ENCODE measurements at regions of chr4 and their contacts with region 1.

Region 1: DNA sequence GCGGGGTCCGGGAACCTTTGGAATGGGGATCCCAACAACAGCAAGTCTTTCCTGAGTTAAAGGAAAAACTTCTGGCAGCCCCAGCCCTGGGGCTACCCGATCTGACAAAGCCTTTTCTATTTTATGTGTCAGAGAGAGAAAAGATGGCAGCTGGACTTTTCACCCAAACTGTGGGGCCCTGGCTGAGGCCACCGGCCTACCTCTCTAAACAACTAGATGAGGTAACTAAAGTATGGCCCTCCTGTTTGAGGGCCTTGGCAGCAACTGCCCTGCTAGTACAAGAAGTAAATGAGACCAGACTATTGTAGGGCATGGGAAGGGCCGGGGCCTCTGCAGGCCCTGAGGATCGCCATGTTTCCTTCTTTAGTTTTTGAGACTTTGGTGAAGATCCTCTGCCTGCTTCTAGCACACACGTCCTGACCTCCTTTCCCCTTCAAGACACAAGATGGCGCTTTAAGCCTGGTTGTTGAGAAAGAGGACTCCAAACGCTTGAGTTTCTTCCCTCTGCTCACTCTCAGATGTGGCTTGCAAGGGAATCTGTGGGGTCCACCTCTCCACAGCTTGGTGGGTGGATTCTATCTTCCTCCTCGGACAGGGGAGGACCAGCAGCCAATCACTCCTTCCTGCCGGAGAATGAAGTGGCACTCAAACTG is 18.5 kb upstream of the DRD5 start:
- DNase-seq: peak in 1 of 2 donors; percentile 77
- H3K4me3 ChIP-seq: no peak overlapping the region
- H3K27ac ChIP-seq: no peak overlapping the region
- H3K4me1 ChIP-seq: no peaks in the 10 kb centered on the region
- H3K27me3 ChIP-seq: no peaks in the 10 kb centered on the region
- CTCF ChIP-seq: peak; percentile 37 to 68 (median 53)

Region 2: DNA sequence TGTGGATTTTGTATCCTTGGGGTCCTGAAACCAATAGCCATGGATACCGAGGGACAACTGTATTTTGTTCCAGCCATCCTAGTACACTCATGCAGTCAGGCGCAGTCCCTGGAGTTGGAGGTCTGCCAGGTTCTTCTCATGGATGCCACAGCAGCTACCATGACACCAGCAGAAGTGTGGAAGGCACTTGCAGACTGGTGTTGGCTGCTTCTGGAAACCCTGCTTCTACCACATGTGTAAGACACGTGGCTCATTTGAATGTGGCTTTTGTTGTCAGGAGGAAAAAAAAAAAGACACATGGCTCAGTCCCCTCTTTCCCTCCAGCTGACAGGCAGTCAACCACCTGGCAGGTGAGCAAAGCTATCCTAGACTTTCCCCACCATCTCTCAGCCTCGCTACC is 37.9 kb after region 1 on chr4:
- intact Hi-C with region 1: no loop called
- DNase-seq: no peak
- H3K4me3 ChIP-seq: no peak overlapping the region
- H3K27ac ChIP-seq: no peak overlapping the region
- H3K4me1 ChIP-seq: no peaks in the 10 kb centered on the region
- H3K27me3 ChIP-seq: no peaks in the 10 kb centered on the region
- CTCF ChIP-seq: no peak

Region 3: DNA sequence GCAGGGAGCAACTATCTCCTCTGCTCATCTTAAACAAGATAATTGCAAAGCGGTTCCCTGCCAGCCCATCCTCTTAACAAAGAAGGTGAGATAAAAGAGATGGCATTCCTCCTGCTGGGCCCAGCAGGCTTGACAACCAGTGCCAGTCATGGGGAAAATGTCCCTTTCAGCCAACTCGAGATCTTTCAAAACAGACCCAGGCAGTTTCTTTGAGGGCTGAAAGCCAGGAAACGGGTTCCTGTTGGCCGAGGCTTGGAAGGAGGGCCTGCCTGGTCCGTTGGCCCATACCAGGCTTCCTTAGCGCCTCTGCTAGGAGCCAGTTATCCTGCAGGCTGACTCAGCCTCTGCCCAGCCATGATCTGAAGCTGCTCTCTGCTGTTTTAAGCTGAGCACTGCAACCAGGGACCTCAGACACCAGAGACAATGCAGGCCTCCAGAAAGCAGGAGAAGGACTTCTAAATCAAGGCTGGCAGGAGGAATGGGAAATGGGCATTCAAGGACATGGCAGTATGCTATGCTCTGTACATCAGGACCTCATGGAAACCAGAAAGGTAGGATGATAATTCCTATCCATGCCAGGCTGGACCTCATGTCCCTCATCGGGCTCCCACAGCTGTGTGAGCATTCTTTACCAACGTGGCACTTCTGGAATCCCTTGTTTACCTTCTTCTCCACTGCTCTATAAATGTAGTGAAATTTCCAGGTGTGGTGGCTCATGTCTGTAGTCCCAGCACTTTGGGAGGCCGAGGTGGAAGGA is 300.8 kb after region 1 on chr4:
- intact Hi-C with region 1: loop called (anchors 1 kb)
- DNase-seq: peak; percentile 48 to 90
- H3K4me3 ChIP-seq: no peak overlapping the region
- H3K27ac ChIP-seq: peak overlapping the region; percentile 34 to 67
- H3K4me1 ChIP-seq: peaks cover 0 to 4% of the 10 kb centered on the region in 2 donors
- H3K27me3 ChIP-seq: no peaks in the 10 kb centered on the region
- CTCF ChIP-seq: peak; percentile 66 to 84 (median 76)

Region 4: DNA sequence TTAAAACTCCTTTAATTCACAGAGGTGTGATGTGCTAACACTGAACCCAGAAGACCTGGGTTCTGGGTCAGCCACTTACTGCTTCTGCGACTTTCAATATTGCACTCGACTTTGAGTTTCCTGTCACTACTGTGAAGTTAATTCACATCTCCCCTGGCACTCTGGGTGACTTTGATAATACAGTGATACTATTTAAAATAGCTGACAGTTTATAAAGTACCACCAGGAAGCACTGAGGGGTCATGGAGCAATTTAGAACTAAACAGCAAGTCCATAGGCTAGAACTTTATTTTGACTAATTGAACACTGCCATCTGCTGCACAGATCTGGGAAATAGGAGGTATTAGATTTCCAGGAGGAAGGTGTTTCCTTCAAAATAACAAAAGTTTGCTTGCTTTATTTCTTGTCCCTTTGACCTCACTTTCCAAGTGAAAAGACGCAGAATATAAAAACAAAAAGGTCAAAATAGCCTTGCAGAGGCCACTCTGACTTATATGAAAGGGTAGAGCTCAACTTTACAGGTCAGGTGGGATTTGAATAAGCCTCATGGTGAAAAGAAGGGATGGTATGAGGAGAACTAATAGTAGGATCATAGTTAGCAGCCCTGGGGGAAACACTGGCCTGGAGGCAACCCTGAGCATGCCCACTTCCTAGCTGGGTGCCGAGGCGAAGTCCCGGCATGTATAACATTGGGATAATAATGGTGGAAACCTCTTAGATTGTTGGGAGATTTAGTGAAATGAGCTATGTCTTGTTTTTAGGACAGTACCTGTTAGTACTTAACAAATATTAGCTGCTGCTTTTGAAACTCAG is 640.9 kb after region 1 on chr4:
- intact Hi-C with region 1: loop called (anchors 5 kb)
- DNase-seq: no peak
- H3K4me3 ChIP-seq: no peak overlapping the region
- H3K27ac ChIP-seq: no peak overlapping the region
- H3K4me1 ChIP-seq: no peaks in the 10 kb centered on the region
- H3K27me3 ChIP-seq: no peaks in the 10 kb centered on the region
- CTCF ChIP-seq: peak; percentile 38 to 64 (median 40)

Measured in ascending aorta (tissue), 2 donors.